Activated CD4-positive, alpha-beta memory T cell treated with anti-CD3 and anti-CD28 coated beads, Interleukin-2, amount 10 ng/mL, durations not matched to agents 7 days and 5 days (primary cell): ENCODE measurements at regions of chr6 and their contacts with region 1.

Region 1: DNA sequence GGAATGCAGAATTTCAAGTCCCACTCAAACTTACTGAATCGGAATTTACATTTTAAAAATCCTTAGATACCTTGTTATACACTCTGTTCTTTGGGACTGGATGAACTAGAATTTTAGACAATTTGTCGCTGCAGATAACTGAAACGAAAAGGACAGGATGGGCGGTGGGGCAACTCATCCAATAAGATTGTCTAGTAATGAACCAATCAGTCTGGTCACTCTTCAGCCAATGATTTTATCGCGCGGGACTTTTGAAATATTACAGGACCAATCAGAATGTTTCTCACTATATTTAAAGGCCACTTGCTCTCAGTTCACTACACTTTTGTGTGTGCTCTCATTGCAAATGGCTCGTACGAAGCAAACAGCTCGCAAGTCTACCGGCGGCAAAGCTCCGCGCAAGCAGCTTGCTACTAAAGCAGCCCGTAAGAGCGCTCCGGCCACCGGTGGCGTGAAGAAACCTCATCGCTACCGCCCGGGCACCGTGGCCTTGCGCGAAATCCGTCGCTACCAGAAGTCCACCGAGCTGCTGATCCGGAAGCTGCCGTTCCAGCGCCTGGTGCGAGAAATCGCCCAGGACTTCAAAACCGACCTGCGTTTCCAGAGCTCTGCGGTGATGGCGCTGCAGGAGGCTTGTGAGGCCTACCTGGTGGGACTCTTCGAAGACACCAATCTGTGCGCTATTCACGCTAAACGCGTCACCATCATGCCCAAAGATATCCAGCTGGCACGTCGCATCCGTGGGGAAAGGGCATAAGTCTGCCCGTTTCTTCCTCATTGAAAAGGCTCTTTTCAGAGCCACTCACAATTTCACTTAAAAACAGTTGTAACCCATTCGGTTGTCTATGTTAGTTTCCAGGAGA is 41.9 kb upstream of the HFE start:
- DNase-seq: peak; percentile 82
- H3K4me3 Mint-ChIP-seq: peak overlapping the region; percentile 79
- H3K27ac Mint-ChIP-seq: peak overlapping the region; percentile 99
- H3K4me1 Mint-ChIP-seq: peaks cover 44% of the 10 kb centered on the region
- H3K27me3 Mint-ChIP-seq: no peaks in the 10 kb centered on the region

Region 2: DNA sequence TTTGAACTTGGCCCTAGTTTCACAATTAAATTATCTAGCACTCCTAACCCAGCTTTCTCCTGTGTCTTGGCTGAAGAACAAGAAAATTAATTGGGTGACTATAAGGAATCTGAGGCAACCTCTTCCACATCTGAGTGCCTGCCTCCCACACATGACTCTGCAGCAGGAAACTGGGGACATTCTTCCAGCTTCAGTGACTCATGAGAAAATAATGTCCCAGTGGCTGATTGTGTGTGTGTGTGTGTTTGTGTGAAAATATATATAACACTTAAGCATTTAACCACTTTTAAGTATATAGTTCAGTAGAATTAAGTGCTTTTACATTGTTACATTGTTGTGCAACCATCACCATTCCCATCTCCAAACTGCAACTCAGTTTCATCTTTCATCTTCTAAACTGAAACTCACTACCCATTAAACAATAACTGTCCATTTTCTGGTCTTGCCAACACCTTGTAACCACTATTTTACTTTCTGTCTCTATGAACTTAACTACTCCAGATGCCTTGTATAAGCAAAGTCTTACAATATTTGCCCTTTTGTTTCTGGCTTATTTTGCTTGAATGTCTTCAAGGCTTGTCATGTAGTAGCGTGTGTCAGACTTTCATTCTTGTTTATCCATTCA is 74.0 kb before region 1 on chr6:
- CTCF ChIA-PET with region 1: no interaction called
- POLR2A ChIA-PET with region 1: no interaction called
- DNase-seq: no peak
- H3K4me3 Mint-ChIP-seq: no peak overlapping the region
- H3K27ac Mint-ChIP-seq: no peak overlapping the region
- H3K4me1 Mint-ChIP-seq: peaks cover 72% of the 10 kb centered on the region
- H3K27me3 Mint-ChIP-seq: no peaks in the 10 kb centered on the region

Region 3: DNA sequence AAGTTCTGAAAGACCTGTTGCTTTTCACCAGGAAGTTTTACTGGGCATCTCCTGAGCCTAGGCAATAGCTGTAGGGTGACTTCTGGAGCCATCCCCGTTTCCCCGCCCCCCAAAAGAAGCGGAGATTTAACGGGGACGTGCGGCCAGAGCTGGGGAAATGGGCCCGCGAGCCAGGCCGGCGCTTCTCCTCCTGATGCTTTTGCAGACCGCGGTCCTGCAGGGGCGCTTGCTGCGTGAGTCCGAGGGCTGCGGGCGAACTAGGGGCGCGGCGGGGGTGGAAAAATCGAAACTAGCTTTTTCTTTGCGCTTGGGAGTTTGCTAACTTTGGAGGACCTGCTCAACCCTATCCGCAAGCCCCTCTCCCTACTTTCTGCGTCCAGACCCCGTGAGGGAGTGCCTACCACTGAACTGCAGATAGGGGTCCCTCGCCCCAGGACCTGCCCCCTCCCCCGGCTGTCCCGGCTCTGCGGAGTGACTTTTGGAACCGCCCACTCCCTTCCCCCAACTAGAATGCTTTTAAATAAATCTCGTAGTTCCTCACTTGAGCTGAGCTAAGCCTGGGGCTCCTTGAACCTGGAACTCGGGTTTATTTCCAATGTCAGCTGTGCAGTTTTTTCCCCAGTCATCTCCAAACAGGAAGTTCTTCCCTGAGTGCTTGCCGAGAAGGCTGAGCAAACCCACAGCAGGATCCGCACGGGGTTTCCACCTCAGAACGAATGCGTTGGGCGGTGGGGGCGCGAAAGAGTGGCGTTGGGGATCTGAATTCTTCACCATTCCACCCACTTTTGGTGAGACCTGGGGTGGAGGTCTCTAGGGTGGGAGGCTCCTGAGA is 42.2 kb after region 1 on chr6 and contains the start of gene HFE:
- CTCF ChIA-PET with region 1: no interaction called
- POLR2A ChIA-PET with region 1: interaction called, 14 read pairs
- DNase-seq: peak; percentile 37
- H3K4me3 Mint-ChIP-seq: peak within 1 kb of the TSS; percentile 77
- H3K27ac Mint-ChIP-seq: peak within 1 kb of the TSS; percentile 47
- H3K4me1 Mint-ChIP-seq: peaks cover 37% of the 10 kb centered on the region
- H3K27me3 Mint-ChIP-seq: peaks cover 8% of the 10 kb centered on the region
- total RNA-seq, gene HFE: 3.1 to 3.4 TPM

Region 4: GRCh38 chr6:26183581-26184366 is 138.5 kb after region 1 on chr6:
- CTCF ChIA-PET with region 1: interaction called, 3 read pairs
- POLR2A ChIA-PET with region 1: interaction called, 26 read pairs
- DNase-seq: peak; percentile 78
- H3K4me3 Mint-ChIP-seq: peak overlapping the region; percentile 75
- H3K27ac Mint-ChIP-seq: peak overlapping the region; percentile 92
- H3K4me1 Mint-ChIP-seq: peaks cover 71% of the 10 kb centered on the region
- H3K27me3 Mint-ChIP-seq: no peaks in the 10 kb centered on the region

Region 5: DNA sequence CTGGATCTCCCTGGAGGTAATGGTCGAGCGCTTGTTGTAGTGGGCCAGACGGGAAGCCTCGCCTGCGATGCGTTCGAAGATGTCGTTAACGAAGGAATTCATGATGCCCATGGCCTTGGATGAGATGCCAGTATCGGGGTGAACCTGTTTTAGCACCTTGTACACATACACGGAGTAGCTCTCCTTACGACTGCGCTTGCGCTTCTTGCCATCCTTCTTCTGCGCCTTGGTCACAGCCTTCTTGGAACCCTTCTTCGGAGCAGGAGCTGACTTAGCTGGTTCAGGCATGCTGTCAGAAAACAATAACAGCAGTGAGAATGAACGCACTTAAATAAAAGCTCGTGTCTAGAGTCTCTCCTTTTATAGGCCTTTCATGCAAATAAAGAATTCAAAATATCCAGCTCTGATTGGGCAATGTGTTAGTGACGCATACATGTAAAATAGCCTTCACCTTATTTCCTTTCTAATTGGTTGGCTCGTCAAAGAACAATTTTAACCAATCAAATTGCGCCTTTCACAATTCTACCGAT is 171.1 kb after region 1 on chr6:
- CTCF ChIA-PET with region 1: no interaction called
- POLR2A ChIA-PET with region 1: interaction called, 38 read pairs
- DNase-seq: peak; percentile 90
- H3K4me3 Mint-ChIP-seq: no peak overlapping the region
- H3K27ac Mint-ChIP-seq: no peak overlapping the region
- H3K4me1 Mint-ChIP-seq: peaks cover 28% of the 10 kb centered on the region
- H3K27me3 Mint-ChIP-seq: no peaks in the 10 kb centered on the region

Region 6: DNA sequence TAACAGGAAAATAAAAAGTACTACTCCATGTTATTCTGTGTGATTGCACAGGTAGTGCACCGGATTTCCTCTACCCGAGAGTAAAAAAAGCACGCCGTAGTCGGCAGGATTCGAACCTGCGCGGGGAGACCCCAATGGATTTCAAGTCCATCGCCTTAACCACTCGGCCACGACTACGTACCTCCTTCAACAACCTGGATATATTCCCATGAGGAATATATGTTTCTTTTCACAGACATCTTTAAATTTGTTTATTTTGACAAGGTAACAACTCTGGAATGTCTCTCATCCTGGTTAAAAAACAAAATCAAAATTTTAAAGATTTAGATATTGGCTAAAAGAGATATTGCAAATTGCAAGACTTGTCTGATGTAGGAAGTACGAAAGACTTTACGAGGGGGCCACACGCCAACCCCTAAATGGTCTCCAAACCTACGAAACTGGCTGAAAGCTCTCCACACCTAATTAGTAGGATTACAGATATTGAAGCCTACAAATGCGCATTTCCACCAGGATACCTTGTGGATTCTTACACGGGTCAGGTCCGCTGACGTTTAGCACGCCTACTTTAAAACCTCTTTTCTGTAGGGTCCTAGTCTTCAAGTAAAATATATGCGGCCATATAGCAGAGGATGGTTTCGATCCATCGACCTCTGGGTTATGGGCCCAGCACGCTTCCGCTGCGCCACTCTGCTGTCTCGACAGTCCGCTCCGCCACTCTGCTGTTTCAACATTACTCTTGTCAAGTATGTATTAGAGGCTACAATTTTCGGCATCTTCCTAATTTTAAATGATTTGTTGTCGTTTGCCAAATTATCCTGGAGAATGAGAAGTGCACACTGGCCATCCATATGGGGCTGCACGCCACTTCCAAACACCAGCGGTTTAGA is 267.4 kb after region 1 on chr6:
- CTCF ChIA-PET with region 1: no interaction called
- POLR2A ChIA-PET with region 1: no interaction called
- DNase-seq: peak; percentile 81
- H3K4me3 Mint-ChIP-seq: peak overlapping the region; percentile 83
- H3K27ac Mint-ChIP-seq: peak overlapping the region; percentile 82
- H3K4me1 Mint-ChIP-seq: peaks cover 53% of the 10 kb centered on the region
- H3K27me3 Mint-ChIP-seq: no peaks in the 10 kb centered on the region

Region 7: DNA sequence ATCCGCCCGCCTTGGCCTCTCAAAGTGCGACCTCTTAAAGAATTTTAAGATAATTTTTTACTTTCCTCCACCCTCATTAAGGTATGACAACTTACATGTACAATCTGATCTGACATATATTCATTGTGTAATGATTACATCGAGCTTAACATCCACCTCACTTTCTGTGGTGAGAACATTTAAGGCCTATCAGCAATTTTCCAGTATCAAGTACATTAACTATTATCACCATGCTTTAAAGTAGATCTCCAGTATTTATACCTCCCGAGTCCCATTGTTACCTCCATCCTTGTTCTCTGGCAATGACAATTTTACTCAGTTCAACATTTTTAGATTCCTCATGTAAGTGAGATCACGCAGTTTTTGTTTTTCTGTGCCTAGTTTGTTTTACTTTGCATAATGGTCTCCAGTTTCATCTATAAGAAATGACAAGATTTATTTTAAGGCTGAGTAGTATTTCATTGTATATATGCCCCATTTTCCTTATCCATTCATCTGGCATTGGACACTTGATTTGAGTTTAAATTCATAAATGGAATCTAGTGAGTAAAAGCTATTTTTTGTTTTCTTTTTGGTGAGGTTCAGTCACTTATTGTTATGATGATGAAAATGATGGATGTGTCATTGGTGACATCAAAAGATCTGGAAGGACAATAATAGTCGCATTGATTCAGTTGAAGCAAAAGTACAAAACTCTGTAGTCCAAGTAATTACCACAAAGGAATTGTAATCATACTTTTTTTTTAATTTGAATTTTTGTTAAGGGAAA is 1779.9 kb after region 1 on chr6:
- CTCF ChIA-PET with region 1: no interaction called
- POLR2A ChIA-PET with region 1: interaction called, 12 read pairs
- DNase-seq: no peak
- H3K4me3 Mint-ChIP-seq: peak overlapping the region; percentile 82
- H3K27ac Mint-ChIP-seq: peak overlapping the region; percentile 99
- H3K4me1 Mint-ChIP-seq: peaks cover 51% of the 10 kb centered on the region
- H3K27me3 Mint-ChIP-seq: no peaks in the 10 kb centered on the region